ENCODE measurements at regions of chr10 and their contacts with region 1.

Region 1: DNA sequence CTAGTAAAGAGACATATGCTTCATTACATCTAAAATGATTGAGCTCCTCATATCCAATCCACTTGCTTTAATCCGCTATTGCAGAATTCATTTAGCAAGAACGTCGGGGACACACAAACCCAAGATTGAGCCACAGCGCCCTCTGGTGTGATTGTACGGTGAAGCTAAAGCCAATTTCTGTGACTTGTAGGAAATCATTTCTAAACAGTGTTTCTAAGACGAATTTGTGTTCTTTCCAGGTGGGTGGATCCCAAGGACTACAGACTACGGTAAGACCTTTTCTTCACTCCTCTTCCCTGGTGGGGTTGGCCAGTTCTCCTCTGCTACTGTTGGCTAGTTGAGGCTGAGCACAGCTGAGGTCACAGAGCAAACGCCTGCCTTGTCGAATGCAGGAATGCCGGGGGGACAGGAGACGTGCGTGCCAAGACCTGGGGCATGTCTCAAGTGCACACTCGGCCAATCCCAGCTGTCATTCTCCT is 5.2 kb downstream of the DMBT1 start:
- DNase-seq: peak; percentile 86
- H3K4me3 Mint-ChIP-seq: no peak overlapping the region
- H3K27ac Mint-ChIP-seq: no peak overlapping the region
- H3K4me1 Mint-ChIP-seq: peaks cover 11% of the 10 kb centered on the region
- H3K27me3 Mint-ChIP-seq: peaks cover 28% of the 10 kb centered on the region

Region 2: GRCh38 chr10:122310311-122311050 is 255.3 kb before region 1 on chr10:
- CTCF ChIA-PET with region 1: interaction called, 10 read pairs
- intact Hi-C with region 1: no loop called
- DNase-seq: no peak
- H3K4me3 Mint-ChIP-seq: no peak overlapping the region
- H3K27ac Mint-ChIP-seq: no peak overlapping the region
- H3K4me1 Mint-ChIP-seq: no peaks in the 10 kb centered on the region
- H3K27me3 Mint-ChIP-seq: peaks cover 2% of the 10 kb centered on the region

Region 3: DNA sequence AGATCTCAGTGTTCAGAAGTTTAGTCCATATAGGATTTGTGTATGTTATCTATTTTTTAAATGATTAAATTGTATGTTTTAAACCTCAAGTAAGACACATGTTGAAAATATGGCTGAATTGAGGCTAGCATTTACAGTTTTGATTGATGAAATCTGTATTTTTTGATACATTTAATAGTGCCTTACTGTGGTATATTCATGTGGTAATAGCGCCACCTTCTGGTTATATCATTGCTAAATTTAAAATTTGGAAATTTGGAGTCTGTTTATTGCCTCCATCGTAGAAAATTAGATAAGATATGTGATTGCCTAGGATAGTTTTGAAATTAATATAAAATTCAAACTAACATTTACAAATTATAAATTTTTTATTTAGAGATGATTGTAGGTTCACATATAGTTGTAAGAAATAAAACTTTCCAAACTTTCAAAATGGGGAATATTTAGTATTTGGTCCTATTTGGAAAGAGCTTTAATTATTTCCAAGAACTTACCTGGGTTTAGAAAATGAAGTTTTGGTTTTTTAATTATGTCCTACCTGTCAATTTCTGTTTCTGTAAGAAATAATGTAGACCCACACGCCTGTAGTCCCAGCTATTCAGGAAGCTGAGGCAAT is 130.4 kb before region 1 on chr10:
- CTCF ChIA-PET with region 1: interaction called, 19 read pairs
- intact Hi-C with region 1: loop called (anchors 5 kb)
- DNase-seq: no peak
- H3K4me3 Mint-ChIP-seq: no peak overlapping the region
- H3K27ac Mint-ChIP-seq: no peak overlapping the region
- H3K4me1 Mint-ChIP-seq: peaks cover 5% of the 10 kb centered on the region
- H3K27me3 Mint-ChIP-seq: no peaks in the 10 kb centered on the region

Region 4: GRCh38 chr10:122515588-122516231 is 50.1 kb before region 1 on chr10:
- CTCF ChIA-PET with region 1: interaction called, 9 read pairs
- intact Hi-C with region 1: loop called (anchors 2 kb)
- DNase-seq: peak; percentile 49
- H3K4me3 Mint-ChIP-seq: no peak overlapping the region
- H3K27ac Mint-ChIP-seq: no peak overlapping the region
- H3K4me1 Mint-ChIP-seq: peaks cover 18% of the 10 kb centered on the region
- H3K27me3 Mint-ChIP-seq: no peaks in the 10 kb centered on the region

Region 5: GRCh38 chr10:122703439-122704118 is 137.8 kb after region 1 on chr10:
- CTCF ChIA-PET with region 1: interaction called, 4 read pairs
- intact Hi-C with region 1: loop called (anchors 1 kb)
- DNase-seq: peak; percentile 72
- H3K4me3 Mint-ChIP-seq: no peak overlapping the region
- H3K27ac Mint-ChIP-seq: no peak overlapping the region
- H3K4me1 Mint-ChIP-seq: peaks cover 5% of the 10 kb centered on the region
- H3K27me3 Mint-ChIP-seq: no peaks in the 10 kb centered on the region

Measured in activated naive CD4-positive, alpha-beta T cell treated with anti-CD3 and anti-CD28 coated beads for 36 hours (primary cell).